Astrocyte of the cerebellum (primary cell): ENCODE measurements at regions of chr11 and their contacts with region 1.

Region 1: GRCh38 chr11:117946842-117947526 is 17.8 kb upstream of the TMPRSS13 start:
- DNase-seq: peak; percentile 82
- H3K4me3 ChIP-seq: no peak overlapping the region
- CTCF ChIP-seq: peak; percentile 93

Region 2: DNA sequence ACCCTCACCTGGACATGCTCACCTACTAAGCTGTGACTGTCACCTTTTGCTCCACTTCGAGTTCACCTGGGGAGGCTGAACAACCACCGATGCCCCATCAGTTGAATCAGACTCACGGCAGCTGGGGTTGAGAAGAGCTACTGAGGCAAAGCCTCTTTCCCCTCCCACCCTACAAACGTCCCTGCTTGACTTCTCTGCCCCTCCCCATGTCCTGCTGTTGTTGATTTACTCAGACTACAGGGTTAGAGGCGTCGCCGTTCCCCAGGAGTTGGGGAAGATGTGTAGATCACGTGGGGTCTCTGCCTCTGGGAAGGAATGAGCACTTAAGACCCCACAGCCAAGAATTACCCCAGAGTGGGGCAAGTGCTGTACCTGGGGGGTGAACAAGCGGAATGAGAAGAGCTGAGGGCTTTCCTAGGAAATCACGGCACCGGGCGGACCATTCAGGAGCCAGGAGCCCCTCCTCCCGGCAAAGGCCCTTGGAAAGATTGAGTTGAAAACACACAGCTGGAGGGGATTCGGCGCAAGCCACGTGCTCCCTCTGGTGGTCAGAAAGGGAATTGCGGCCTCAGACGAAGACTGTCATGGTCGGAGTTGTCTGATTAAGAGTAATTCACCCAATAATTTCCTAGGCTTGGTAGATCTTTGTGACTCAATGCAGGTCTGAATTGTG is 129.5 kb before region 1 on chr11:
- in situ Hi-C with region 1: loop called (anchors 25 kb)
- DNase-seq: peak; percentile 37
- H3K4me3 ChIP-seq: no peak overlapping the region
- CTCF ChIP-seq: peak; percentile 100

Region 3: GRCh38 chr11:118051611-118052461 is 104.9 kb after region 1 on chr11:
- in situ Hi-C with region 1: no loop called
- DNase-seq: no peak
- H3K4me3 ChIP-seq: no peak overlapping the region
- CTCF ChIP-seq: no peak